Activated CD8-positive, alpha-beta memory T cell treated with anti-CD3 and anti-CD28 coated beads, Interleukin-2, amount 10 ng/mL, durations not matched to agents 7 days and 5 days (primary cell): ENCODE measurements at regions of chr4 and their contacts with region 1.

Region 1: GRCh38 chr4:83510442-83510841 is 25.5 kb upstream of the GPAT3 start:
- DNase-seq: no peak
- ATAC-seq: peak; percentile 20
- H3K4me3 Mint-ChIP-seq: no peak overlapping the region
- H3K27ac Mint-ChIP-seq: no peak overlapping the region
- H3K4me1 Mint-ChIP-seq: peaks cover 8% of the 10 kb centered on the region
- H3K27me3 Mint-ChIP-seq: no peaks in the 10 kb centered on the region

Region 2: GRCh38 chr4:83535520-83536361 is 25.3 kb after region 1 on chr4 and contains the start of gene GPAT3:
- CTCF ChIA-PET with region 1: interaction called, 12 read pairs
- DNase-seq: peak; percentile 84
- ATAC-seq: peak; percentile 89
- H3K4me3 Mint-ChIP-seq: peak within 1 kb of the TSS; percentile 84
- H3K27ac Mint-ChIP-seq: peak within 1 kb of the TSS; percentile 73
- H3K4me1 Mint-ChIP-seq: peaks cover 34% of the 10 kb centered on the region
- H3K27me3 Mint-ChIP-seq: peaks cover 41% of the 10 kb centered on the region
- total RNA-seq, gene GPAT3: 25.9 to 34.0 TPM

Region 3: GRCh38 chr4:83542225-83542624 is 31.8 kb after region 1 on chr4:
- CTCF ChIA-PET with region 1: interaction called, 12 read pairs
- DNase-seq: no peak
- ATAC-seq: no peak
- H3K4me3 Mint-ChIP-seq: no peak overlapping the region
- H3K27ac Mint-ChIP-seq: no peak overlapping the region
- H3K4me1 Mint-ChIP-seq: peaks cover 29% of the 10 kb centered on the region
- H3K27me3 Mint-ChIP-seq: peaks cover 2% of the 10 kb centered on the region

Region 4: GRCh38 chr4:83582289-83582769 is 71.9 kb after region 1 on chr4:
- CTCF ChIA-PET with region 1: interaction called, 31 read pairs
- DNase-seq: no peak
- ATAC-seq: no peak
- H3K4me3 Mint-ChIP-seq: no peak overlapping the region
- H3K27ac Mint-ChIP-seq: no peak overlapping the region
- H3K4me1 Mint-ChIP-seq: peaks cover 10% of the 10 kb centered on the region
- H3K27me3 Mint-ChIP-seq: peaks cover 5% of the 10 kb centered on the region

Region 5: GRCh38 chr4:83639849-83640493 is 129.5 kb after region 1 on chr4:
- CTCF ChIA-PET with region 1: interaction called, 84 read pairs
- DNase-seq: peak; percentile 67
- ATAC-seq: peak; percentile 67
- H3K4me3 Mint-ChIP-seq: no peak overlapping the region
- H3K27ac Mint-ChIP-seq: no peak overlapping the region
- H3K4me1 Mint-ChIP-seq: peaks cover 2% of the 10 kb centered on the region
- H3K27me3 Mint-ChIP-seq: peaks cover 13% of the 10 kb centered on the region